Prostate gland (tissue), 2 donors: ENCODE measurements at regions of chr11 and their contacts with region 1.

Region 1: GRCh38 chr11:45846974-45847910 is at the start of gene CRY2:
- DNase-seq: peak; percentile 99
- H3K4me3 ChIP-seq: peak within 1 kb of the TSS; percentile 78 to 92
- H3K27ac ChIP-seq: peak within 1 kb of the TSS; percentile 88 to 95
- H3K4me1 ChIP-seq: peaks cover 11% of the 10 kb centered on the region
- H3K27me3 ChIP-seq: no peaks in the 10 kb centered on the region
- CTCF ChIP-seq: peak in 2 of 4 experiments; percentile 28 to 29
- POLR2A ChIP-seq: peak; percentile 99
- total RNA-seq, gene CRY2: 45.4 to 70.8 TPM

Region 2: GRCh38 chr11:45804761-45805304 is 42.4 kb before region 1 on chr11 and contains the start of gene SLC35C1:
- intact Hi-C with region 1: loop called (anchors 5 kb)
- DNase-seq: peak; percentile 97
- H3K4me3 ChIP-seq: peak within 1 kb of the TSS; percentile 70 to 83
- H3K27ac ChIP-seq: peak within 1 kb of the TSS; percentile 81 to 88
- H3K4me1 ChIP-seq: peaks cover 24% of the 10 kb centered on the region
- H3K27me3 ChIP-seq: no peaks in the 10 kb centered on the region
- CTCF ChIP-seq: peak in 3 of 4 experiments; percentile 45 to 53 (median 49)
- POLR2A ChIP-seq: peak; percentile 98
- total RNA-seq, gene SLC35C1: 14.1 to 20.6 TPM

Region 3: DNA sequence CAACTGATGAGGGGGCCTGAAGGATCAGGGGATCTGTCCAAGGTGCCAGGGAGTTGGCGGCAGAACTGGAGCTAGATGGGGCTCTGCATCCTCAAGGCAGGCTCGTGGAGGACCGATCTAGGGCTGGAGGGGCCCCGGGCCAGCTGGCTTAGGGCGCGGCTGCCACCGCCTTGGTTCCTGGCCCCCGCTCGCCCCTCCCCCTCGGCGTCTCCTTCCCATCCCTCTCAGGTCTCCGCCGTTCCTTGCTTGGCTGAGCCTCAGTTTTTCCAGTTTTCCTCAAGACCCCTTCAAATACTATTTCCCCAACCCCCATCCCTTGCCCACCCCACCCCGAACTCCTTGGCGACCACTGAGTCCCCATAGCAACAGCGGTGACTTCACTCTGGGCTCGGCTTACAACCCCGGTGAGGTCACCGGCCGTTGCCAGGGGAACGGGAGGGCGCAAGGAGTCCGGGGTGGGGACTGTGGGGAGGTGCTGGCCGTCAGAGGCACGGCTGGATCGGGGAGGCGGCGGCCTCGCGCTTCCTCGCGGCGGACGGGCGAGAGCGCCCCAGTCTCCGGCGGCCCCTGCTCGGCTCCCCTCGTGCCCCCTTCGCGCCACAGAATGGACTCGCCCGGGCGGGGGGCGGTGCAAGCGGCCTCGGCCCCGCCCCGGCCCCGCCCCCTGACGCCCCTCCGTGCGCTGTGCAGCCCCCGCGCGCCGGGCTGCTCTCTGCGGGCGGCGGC is 52.4 kb after region 1 on chr11:
- intact Hi-C with region 1: no loop called
- DNase-seq: peak; percentile 61
- H3K4me3 ChIP-seq: peak overlapping the region; percentile 31 to 49
- H3K27ac ChIP-seq: peak overlapping the region; percentile 34 to 72
- H3K4me1 ChIP-seq: peaks cover 5% of the 10 kb centered on the region
- H3K27me3 ChIP-seq: no peaks in the 10 kb centered on the region
- CTCF ChIP-seq: no peak
- POLR2A ChIP-seq: no peak

Region 4: DNA sequence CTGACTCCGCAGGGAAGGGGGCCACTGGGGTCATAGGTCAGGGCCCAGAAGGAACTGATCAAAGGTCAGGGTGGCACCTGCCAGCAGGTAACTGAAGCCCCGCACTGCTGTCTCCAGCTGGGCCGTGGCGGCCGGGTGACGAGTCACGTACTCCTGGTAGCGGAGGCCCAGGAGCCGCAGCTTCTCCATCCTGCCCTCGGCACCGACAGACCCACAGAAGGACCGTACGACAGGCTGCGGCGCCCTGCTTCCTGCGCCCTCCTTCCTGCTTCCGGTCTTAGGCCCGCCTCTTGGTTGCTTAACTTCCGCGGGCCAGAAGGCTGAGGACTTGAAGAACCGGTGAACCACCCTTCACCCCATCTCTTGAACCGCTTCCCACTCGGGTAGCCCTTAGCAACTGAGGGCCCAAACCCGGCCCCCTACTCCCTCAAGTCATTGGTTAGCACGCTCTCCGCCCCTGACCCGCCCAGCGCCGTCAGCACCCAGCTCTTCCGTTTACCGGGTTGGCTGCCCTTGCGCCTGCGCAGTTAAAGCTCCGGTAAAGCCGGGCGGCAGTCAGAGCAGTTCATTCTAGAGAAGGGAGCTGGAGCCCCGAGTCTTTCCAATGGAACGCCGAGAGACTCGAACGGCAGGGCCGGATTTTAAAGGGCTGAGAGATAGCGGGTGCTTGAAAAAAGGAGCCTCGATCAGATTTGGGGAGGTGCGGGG is 70.5 kb after region 1 on chr11 and contains the start of gene PEX16:
- intact Hi-C with region 1: loop called (anchors 5 kb)
- DNase-seq: peak; percentile 99
- H3K4me3 ChIP-seq: peak within 1 kb of the TSS; percentile 60 to 74
- H3K27ac ChIP-seq: peak within 1 kb of the TSS; percentile 89 to 90
- H3K4me1 ChIP-seq: peaks cover 21% of the 10 kb centered on the region
- H3K27me3 ChIP-seq: no peaks in the 10 kb centered on the region
- CTCF ChIP-seq: no peak
- POLR2A ChIP-seq: peak; percentile 85
- total RNA-seq, gene PEX16: 31.8 to 35.4 TPM